ENCODE measurements at regions of chr2 and their contacts with region 1.

Region 1: DNA sequence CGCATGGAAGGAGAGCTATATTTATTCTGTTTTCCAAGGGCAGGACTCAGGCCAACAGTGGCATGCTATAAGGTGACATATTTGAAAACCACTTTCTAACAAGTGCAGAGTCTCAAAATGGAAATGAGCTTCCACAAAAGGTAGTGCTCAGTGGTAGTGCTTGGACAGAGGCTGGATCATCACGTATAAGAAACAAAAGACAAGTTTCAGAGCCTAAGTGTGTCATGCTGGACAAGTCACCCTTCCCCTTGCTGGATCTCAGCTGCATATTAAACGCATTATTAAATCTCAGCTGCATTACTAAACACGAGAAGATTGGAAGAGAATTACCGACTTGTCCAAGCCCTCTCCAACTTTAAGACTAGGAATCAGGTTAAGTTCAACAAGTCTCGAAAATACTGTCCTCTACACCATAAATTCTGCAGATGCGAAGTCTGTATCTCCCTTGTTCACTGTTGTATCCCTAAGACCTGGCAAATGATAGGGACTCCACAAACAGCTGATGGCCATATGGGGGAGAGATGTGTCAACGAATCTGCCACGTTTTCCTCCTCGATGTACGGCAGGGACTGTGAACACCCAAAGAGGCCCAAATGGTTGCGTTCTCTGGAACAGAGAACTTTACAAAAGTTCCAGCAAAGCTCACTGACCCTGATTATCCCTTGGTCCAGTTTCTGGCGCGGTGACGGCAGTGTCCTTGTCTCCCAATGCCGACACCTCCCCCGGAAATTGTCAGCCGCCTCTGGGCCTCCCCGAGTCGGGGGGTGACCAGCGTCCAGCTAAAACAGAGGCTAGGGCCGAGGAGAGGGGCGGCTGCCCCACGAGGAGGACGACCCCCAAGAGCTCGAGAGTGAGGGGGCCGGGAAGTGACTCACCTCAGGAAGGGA is 611 bp downstream of the NOL10 start:
- DNase-seq: no peak
- H3K4me3 Mint-ChIP-seq: no peak overlapping the region
- H3K27ac Mint-ChIP-seq: no peak overlapping the region
- H3K4me1 Mint-ChIP-seq: peaks cover 10% of the 10 kb centered on the region
- H3K27me3 Mint-ChIP-seq: no peaks in the 10 kb centered on the region

Region 2: GRCh38 chr2:10477443-10478297 is 211.5 kb before region 1 on chr2:
- intact Hi-C with region 1: no loop called
- DNase-seq: no peak
- H3K4me3 Mint-ChIP-seq: no peak overlapping the region
- H3K27ac Mint-ChIP-seq: peak overlapping the region; percentile 30
- H3K4me1 Mint-ChIP-seq: peaks cover 8% of the 10 kb centered on the region
- H3K27me3 Mint-ChIP-seq: peaks cover 22% of the 10 kb centered on the region

Region 3: GRCh38 chr2:10812362-10813162 is 123.4 kb after region 1 on chr2 and contains the start of gene PDIA6:
- intact Hi-C with region 1: loop called (anchors 1 kb)
- DNase-seq: peak; percentile 99
- H3K4me3 Mint-ChIP-seq: peak within 1 kb of the TSS; percentile 94
- H3K27ac Mint-ChIP-seq: peak within 1 kb of the TSS; percentile 95
- H3K4me1 Mint-ChIP-seq: peaks cover 34% of the 10 kb centered on the region
- H3K27me3 Mint-ChIP-seq: peaks cover 17% of the 10 kb centered on the region
- total RNA-seq, gene PDIA6: 183 and 187 TPM in 2 replicates